ENCODE measurements at regions of chr10 and their contacts with region 1.

Region 1: GRCh38 chr10:94315024-94315451 is 47.7 kb downstream of the NOC3L start:
- DNase-seq: no peak
- ATAC-seq: no peak
- H3K4me3 ChIP-seq: no peak overlapping the region
- H3K27ac ChIP-seq: no peak overlapping the region
- H3K4me1 ChIP-seq: no peaks in the 10 kb centered on the region
- H3K27me3 ChIP-seq: no peaks in the 10 kb centered on the region
- CTCF ChIP-seq: no peak
- EP300 ChIP-seq: no peak
- POLR2A ChIP-seq: no peak
- RAD21 ChIP-seq: no peak

Region 2: GRCh38 chr10:93916257-93917063 is 398.6 kb before region 1 on chr10:
- CTCF ChIA-PET with region 1: interaction called, 23 read pairs
- POLR2A ChIA-PET with region 1: no interaction called
- RAD21 ChIA-PET with region 1: interaction called, 13 read pairs
- SMC1A ChIA-PET with region 1: interaction called, 12 read pairs
- in situ Hi-C with region 1: loop called (anchors 10 kb)
- intact Hi-C with region 1: loop called (anchors 2 kb)
- DNase-seq: no peak
- ATAC-seq: peak; percentile 41; the same call in 2 of the 3 replicates
- H3K4me3 ChIP-seq: no peak overlapping the region
- H3K27ac ChIP-seq: no peak overlapping the region
- H3K4me1 ChIP-seq: no peaks in the 10 kb centered on the region
- H3K27me3 ChIP-seq: no peaks in the 10 kb centered on the region
- CTCF ChIP-seq: peak; percentile 33 to 41 (median 41); a peak in 5 of 6 replicates
- EP300 ChIP-seq: no peak
- POLR2A ChIP-seq: no peak
- RAD21 ChIP-seq: peak; percentile 46

Region 3: GRCh38 chr10:94088926-94089381 is 226.1 kb before region 1 on chr10:
- CTCF ChIA-PET with region 1: no interaction called
- POLR2A ChIA-PET with region 1: no interaction called
- RAD21 ChIA-PET with region 1: no interaction called
- SMC1A ChIA-PET with region 1: no interaction called
- in situ Hi-C with region 1: no loop called
- intact Hi-C with region 1: no loop called
- DNase-seq: no peak
- ATAC-seq: no peak
- H3K4me3 ChIP-seq: no peak overlapping the region
- H3K27ac ChIP-seq: no peak overlapping the region
- H3K4me1 ChIP-seq: no peaks in the 10 kb centered on the region
- H3K27me3 ChIP-seq: peaks cover 0 to 2% of the 10 kb centered on the region in 2 experiments; a peak in 3 of 4 replicates
- CTCF ChIP-seq: no peak
- EP300 ChIP-seq: no peak
- POLR2A ChIP-seq: no peak
- RAD21 ChIP-seq: no peak

Measured in GM12878 (cell line).